CD4-positive, alpha-beta T cell (primary cell): ENCODE measurements at regions of chr1 and their contacts with region 1.

Region 1: DNA sequence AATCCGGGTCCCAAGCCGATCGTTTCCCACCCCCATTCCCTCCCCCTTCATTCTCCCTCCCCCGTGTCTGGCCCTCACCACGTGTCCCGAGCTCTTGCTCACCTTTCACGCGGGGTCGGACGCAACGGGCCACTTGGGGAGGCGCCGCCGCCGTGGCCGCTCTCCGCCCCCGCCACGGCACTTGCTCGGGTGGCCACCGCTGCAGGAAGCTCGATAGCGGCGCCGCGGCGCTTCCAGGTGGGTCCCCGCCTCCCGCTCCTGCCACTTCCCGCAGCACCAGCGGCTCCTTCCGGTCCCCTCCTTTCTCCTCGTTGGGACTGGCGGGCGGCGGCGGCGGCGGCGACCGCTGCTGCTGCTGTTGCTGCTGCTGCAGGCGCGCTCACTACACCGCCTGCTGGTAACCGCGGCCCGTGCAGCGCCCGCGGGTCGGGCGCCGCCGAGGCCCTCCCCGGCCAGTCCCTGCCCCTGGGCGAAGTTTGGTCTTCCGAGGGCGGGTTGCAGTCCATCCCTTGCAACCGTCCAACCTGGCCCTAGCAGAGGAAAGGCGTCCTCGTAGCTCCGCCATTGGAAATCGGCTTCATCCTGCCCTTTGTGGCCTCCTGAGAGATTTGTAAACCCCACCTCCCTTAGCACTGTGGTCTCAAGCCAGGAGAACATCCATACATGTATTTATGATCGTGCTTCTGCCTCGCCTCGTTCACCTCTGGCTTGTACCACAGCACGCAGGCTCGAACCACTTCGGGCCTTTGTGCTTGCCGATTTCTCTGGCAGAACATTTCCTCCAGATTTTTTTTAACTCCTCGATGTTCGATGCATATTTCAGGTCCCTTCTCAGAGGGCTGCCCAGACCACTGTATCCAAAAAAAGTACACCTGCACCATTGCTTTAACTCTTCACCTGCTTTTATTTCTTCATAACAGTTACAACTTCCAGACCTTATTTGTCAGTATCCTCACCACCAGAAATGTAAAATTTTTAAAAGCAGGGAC is 996 bp upstream of the ZZZ3 start:
- DNase-seq: peak; percentile 80 to 95 (median 91)
- ATAC-seq: peak; percentile 68
- H3K4me3 ChIP-seq: peak overlapping the region; percentile 77
- H3K4me3 Mint-ChIP-seq: peak overlapping the region; percentile 91
- H3K27ac ChIP-seq: peak overlapping the region; percentile 87
- H3K27ac Mint-ChIP-seq: peak overlapping the region; percentile 94
- H3K4me1 ChIP-seq: peaks cover 15% of the 10 kb centered on the region
- H3K4me1 Mint-ChIP-seq: peaks cover 51% of the 10 kb centered on the region
- H3K27me3 ChIP-seq: no peaks in the 10 kb centered on the region
- H3K27me3 Mint-ChIP-seq: no peaks in the 10 kb centered on the region
- CTCF ChIP-seq: peak; percentile 90

Region 2: GRCh38 chr1:76074321-76075187 is 1608.9 kb before region 1 on chr1 and contains the start of gene ST6GALNAC3:
- CTCF ChIA-PET with region 1: no interaction called
- POLR2A ChIA-PET with region 1: no interaction called
- intact Hi-C with region 1: loop called in 1 of 2 experiments (anchors 10 kb)
- DNase-seq: peak; percentile 59 to 91 (median 74)
- ATAC-seq: peak; percentile 96
- H3K4me3 ChIP-seq: peak within 1 kb of the TSS; percentile 80
- H3K4me3 Mint-ChIP-seq: peak within 1 kb of the TSS; percentile 93
- H3K27ac ChIP-seq: no peak within 1 kb of the TSS
- H3K27ac Mint-ChIP-seq: peak within 1 kb of the TSS; percentile 79
- H3K4me1 ChIP-seq: peaks cover 15% of the 10 kb centered on the region
- H3K4me1 Mint-ChIP-seq: peaks cover 23% of the 10 kb centered on the region
- H3K27me3 ChIP-seq: no peaks in the 10 kb centered on the region
- H3K27me3 Mint-ChIP-seq: no peaks in the 10 kb centered on the region
- CTCF ChIP-seq: no peak
- total RNA-seq, gene ST6GALNAC3: 0.77 to 1.3 TPM

Region 3: GRCh38 chr1:77219166-77219887 is 464.1 kb before region 1 on chr1 and contains the start of gene PIGK:
- CTCF ChIA-PET with region 1: interaction called, 4 read pairs
- POLR2A ChIA-PET with region 1: interaction called, 3 read pairs
- intact Hi-C with region 1: loop called in 1 of 2 experiments (anchors 5 kb)
- DNase-seq: peak; percentile 76 to 93 (median 82)
- ATAC-seq: peak; percentile 96
- H3K4me3 ChIP-seq: peak within 1 kb of the TSS; percentile 99
- H3K4me3 Mint-ChIP-seq: peak within 1 kb of the TSS; percentile 98
- H3K27ac ChIP-seq: peak within 1 kb of the TSS; percentile 86 to 88
- H3K27ac Mint-ChIP-seq: peak within 1 kb of the TSS; percentile 98
- H3K4me1 ChIP-seq: peaks cover 10% of the 10 kb centered on the region
- H3K4me1 Mint-ChIP-seq: peaks cover 60% of the 10 kb centered on the region
- H3K27me3 ChIP-seq: no peaks in the 10 kb centered on the region
- H3K27me3 Mint-ChIP-seq: no peaks in the 10 kb centered on the region
- CTCF ChIP-seq: no peak
- total RNA-seq, gene PIGK: 10.1 to 10.3 TPM

Region 4: DNA sequence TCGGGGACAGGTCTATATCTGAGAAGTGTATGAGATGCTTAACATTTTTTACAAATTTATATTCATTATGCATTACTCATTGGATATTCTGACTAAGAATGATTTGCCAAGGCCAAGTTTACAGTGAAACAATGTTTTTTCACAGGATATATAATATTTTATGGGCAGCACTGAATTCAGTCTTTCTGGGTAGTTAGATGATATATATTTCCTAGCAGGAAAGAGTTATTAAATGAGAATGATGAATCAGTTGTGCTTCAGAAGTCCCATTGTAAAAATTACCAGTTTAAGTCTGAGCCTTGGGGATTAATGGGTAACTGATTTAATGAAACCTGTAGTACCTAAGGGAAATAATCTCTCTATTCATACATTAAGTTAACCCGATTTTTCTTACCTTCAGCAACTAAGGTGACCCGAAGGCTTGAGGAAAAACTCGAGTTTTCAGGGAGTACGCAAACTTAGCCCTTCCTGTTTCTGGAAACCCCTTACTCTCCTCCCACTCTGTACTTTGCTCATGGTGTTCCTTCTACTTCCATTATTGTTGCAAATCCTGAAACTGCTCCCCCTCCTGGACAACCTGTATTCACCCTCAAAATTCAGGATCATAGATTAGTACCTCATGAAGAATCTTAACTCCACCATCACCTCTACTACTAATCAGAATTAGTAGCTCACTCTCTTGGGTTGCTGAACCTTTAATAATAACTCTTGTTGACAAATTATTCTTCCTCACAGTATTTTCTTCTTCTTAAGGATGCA is 266.6 kb before region 1 on chr1:
- CTCF ChIA-PET with region 1: no interaction called
- POLR2A ChIA-PET with region 1: no interaction called
- intact Hi-C with region 1: loop called in 1 of 2 experiments (anchors 10 kb)
- DNase-seq: no peak
- ATAC-seq: no peak
- H3K4me3 ChIP-seq: no peak overlapping the region
- H3K4me3 Mint-ChIP-seq: no peak overlapping the region
- H3K27ac ChIP-seq: no peak overlapping the region
- H3K27ac Mint-ChIP-seq: no peak overlapping the region
- H3K4me1 ChIP-seq: peaks cover 29% of the 10 kb centered on the region
- H3K4me1 Mint-ChIP-seq: peaks cover 53% of the 10 kb centered on the region
- H3K27me3 ChIP-seq: no peaks in the 10 kb centered on the region
- H3K27me3 Mint-ChIP-seq: no peaks in the 10 kb centered on the region
- CTCF ChIP-seq: no peak

Region 5: DNA sequence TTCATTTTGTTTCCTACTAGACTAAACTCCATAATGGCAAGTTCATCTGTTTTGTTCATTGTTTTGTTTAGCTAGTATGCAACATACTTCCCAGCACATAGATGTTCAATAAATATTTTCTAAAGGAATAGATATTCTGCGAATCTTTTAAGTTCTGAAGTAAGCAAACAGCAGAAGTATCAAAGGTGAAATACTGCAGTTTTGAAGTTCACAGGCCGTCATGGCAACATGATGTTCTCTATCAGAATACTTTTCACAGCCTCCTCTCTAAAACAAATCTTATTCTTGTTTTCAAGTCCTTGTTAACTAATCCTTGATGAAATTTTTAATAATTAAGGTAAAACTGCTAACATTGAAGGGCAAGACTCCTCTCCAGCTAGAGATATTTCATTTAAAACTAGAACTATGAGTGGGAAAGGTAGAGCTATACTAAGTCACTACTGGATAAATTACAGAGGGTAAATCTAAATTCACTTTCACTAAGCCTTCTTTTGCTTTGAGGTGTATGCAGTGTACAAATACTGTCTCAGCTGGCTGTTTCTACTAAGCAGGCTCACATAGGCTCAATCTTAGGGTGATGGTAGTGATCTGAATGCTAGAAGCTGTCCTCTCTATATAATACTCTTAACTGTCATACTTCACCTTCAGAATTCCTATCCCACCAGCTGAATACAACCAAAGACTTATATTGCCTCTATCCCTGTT is 97.7 kb before region 1 on chr1:
- CTCF ChIA-PET with region 1: no interaction called
- POLR2A ChIA-PET with region 1: no interaction called
- intact Hi-C with region 1: loop called in 1 of 2 experiments (anchors 5 kb)
- DNase-seq: no peak
- ATAC-seq: no peak
- H3K4me3 ChIP-seq: no peak overlapping the region
- H3K4me3 Mint-ChIP-seq: no peak overlapping the region
- H3K27ac ChIP-seq: no peak overlapping the region
- H3K27ac Mint-ChIP-seq: peak overlapping the region; percentile 15
- H3K4me1 ChIP-seq: no peaks in the 10 kb centered on the region
- H3K4me1 Mint-ChIP-seq: peaks cover 19% of the 10 kb centered on the region
- H3K27me3 ChIP-seq: no peaks in the 10 kb centered on the region
- H3K27me3 Mint-ChIP-seq: no peaks in the 10 kb centered on the region
- CTCF ChIP-seq: no peak

Region 6: DNA sequence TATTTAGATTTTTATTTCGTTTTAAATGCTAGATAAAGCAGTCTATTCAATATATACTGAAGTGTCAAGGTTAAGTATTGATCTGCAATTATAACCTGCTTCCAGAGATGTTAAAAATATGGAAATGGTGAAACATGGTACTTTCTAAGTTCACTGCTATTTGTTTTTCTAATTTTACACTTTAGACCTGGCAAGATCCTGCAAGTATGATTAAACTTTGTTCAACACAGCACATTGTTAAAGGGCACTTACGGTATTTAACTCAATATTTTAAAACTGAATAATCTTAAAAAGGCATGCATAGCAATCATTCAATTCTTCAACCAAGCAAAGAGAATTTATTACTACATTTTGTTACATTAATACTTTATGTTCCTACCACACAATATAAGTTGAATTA is 34.7 kb after region 1 on chr1:
- CTCF ChIA-PET with region 1: no interaction called
- POLR2A ChIA-PET with region 1: no interaction called
- intact Hi-C with region 1: no loop called
- DNase-seq: no peak
- ATAC-seq: no peak
- H3K4me3 ChIP-seq: no peak overlapping the region
- H3K4me3 Mint-ChIP-seq: no peak overlapping the region
- H3K27ac ChIP-seq: no peak overlapping the region
- H3K27ac Mint-ChIP-seq: no peak overlapping the region
- H3K4me1 ChIP-seq: no peaks in the 10 kb centered on the region
- H3K4me1 Mint-ChIP-seq: no peaks in the 10 kb centered on the region
- H3K27me3 ChIP-seq: no peaks in the 10 kb centered on the region
- H3K27me3 Mint-ChIP-seq: no peaks in the 10 kb centered on the region
- CTCF ChIP-seq: no peak

Region 7: GRCh38 chr1:77779529-77780281 is 96.3 kb after region 1 on chr1 and contains the start of gene MIGA1:
- CTCF ChIA-PET with region 1: no interaction called
- POLR2A ChIA-PET with region 1: interaction called, 10 read pairs
- intact Hi-C with region 1: loop called (anchors 1 to 5 kb)
- DNase-seq: peak; percentile 78 to 96 (median 84)
- ATAC-seq: peak; percentile 98
- H3K4me3 ChIP-seq: peak within 1 kb of the TSS; percentile 96
- H3K4me3 Mint-ChIP-seq: peak within 1 kb of the TSS; percentile 97
- H3K27ac ChIP-seq: peak within 1 kb of the TSS; percentile 32 to 55
- H3K27ac Mint-ChIP-seq: peak within 1 kb of the TSS; percentile 89
- H3K4me1 ChIP-seq: peaks cover 14% of the 10 kb centered on the region
- H3K4me1 Mint-ChIP-seq: peaks cover 43% of the 10 kb centered on the region
- H3K27me3 ChIP-seq: no peaks in the 10 kb centered on the region
- H3K27me3 Mint-ChIP-seq: no peaks in the 10 kb centered on the region
- CTCF ChIP-seq: no peak
- total RNA-seq, gene MIGA1: 12.2 to 15.8 TPM

Region 8: GRCh38 chr1:78004719-78005447 is 321.4 kb after region 1 on chr1 and contains the start of gene DNAJB4:
- CTCF ChIA-PET with region 1: interaction called, 6 read pairs
- POLR2A ChIA-PET with region 1: interaction called, 24 read pairs
- intact Hi-C with region 1: loop called in 1 of 2 experiments (anchors 1 kb)
- DNase-seq: peak; percentile 25 to 95 (median 48)
- ATAC-seq: peak; percentile 98
- H3K4me3 ChIP-seq: peak within 1 kb of the TSS; percentile 71
- H3K4me3 Mint-ChIP-seq: peak within 1 kb of the TSS; percentile 86
- H3K27ac ChIP-seq: peak within 1 kb of the TSS; percentile 78 to 96
- H3K27ac Mint-ChIP-seq: peak within 1 kb of the TSS; percentile 98
- H3K4me1 ChIP-seq: peaks cover 4% of the 10 kb centered on the region
- H3K4me1 Mint-ChIP-seq: peaks cover 54% of the 10 kb centered on the region
- H3K27me3 ChIP-seq: no peaks in the 10 kb centered on the region
- H3K27me3 Mint-ChIP-seq: no peaks in the 10 kb centered on the region
- CTCF ChIP-seq: no peak
- total RNA-seq, gene DNAJB4: 19.2 to 22.7 TPM